ENCODE measurements at regions of chr6 and their contacts with region 1.

Region 1: DNA sequence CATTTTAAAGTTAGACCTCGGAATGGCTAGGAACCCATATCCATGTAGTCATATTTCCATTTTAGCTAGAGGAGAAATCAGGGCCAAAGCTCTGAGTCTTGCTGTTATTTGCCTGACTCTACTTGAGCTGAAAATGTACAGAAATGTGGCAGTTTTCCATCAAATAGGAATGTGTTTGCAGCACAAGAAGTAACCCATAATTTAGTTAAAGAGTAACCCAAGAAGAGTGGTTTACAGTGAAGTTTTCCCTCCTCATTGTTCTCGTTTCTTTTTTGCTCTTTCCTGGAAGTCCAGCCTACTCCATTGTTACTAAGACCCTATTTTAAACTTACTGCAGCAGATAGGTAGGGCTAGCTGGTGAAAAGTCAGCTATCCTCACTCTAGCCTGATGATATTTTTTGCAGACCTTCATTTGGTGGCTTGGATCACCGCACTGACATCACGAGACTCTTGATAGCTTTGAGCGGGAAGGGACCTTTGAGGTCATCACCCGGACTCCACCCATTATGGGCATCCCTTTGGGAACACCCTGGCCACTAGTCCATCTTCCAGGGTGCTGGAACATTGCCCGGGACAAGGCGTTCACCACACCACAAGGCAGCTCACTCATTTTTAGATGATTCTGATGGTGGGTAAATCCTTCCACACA is 28.0 kb upstream of the ADGRF5 start:
- DNase-seq: peak; percentile 74 to 90 (median 83)
- ATAC-seq: peak; percentile 79 to 86 (median 82)
- H3K4me3 ChIP-seq: peak overlapping the region in 2 of 12 donors; percentile 17 to 21
- H3K27ac ChIP-seq: peak overlapping the region; percentile 61 to 90 (median 83)
- H3K4me1 ChIP-seq: peaks cover 0 to 61% (median 29%) of the 10 kb centered on the region in 12 donors
- H3K27me3 ChIP-seq: no peaks in the 10 kb centered on the region
- CTCF ChIP-seq: no peak
- POLR2A ChIP-seq: no peak

Region 2: GRCh38 chr6:46921731-46922130 is 28.0 kb before region 1 on chr6 and contains the start of gene ADGRF5:
- intact Hi-C with region 1: loop called in 2 of 10 experiments (anchors 2 kb)
- DNase-seq: peak; percentile 51 to 68 (median 57)
- ATAC-seq: peak; percentile 51 to 78 (median 64)
- H3K4me3 ChIP-seq: peak within 1 kb of the TSS; percentile 24 to 72 (median 53)
- H3K27ac ChIP-seq: peak within 1 kb of the TSS; percentile 70 to 93 (median 88)
- H3K4me1 ChIP-seq: peaks cover 0 to 58% (median 18%) of the 10 kb centered on the region in 12 donors
- H3K27me3 ChIP-seq: no peaks in the 10 kb centered on the region
- CTCF ChIP-seq: no peak
- POLR2A ChIP-seq: peak in 1 of 2 donors; percentile 61
- total RNA-seq, gene ADGRF5: 27.3 to 89.6 (median 47.6) TPM

Region 3: DNA sequence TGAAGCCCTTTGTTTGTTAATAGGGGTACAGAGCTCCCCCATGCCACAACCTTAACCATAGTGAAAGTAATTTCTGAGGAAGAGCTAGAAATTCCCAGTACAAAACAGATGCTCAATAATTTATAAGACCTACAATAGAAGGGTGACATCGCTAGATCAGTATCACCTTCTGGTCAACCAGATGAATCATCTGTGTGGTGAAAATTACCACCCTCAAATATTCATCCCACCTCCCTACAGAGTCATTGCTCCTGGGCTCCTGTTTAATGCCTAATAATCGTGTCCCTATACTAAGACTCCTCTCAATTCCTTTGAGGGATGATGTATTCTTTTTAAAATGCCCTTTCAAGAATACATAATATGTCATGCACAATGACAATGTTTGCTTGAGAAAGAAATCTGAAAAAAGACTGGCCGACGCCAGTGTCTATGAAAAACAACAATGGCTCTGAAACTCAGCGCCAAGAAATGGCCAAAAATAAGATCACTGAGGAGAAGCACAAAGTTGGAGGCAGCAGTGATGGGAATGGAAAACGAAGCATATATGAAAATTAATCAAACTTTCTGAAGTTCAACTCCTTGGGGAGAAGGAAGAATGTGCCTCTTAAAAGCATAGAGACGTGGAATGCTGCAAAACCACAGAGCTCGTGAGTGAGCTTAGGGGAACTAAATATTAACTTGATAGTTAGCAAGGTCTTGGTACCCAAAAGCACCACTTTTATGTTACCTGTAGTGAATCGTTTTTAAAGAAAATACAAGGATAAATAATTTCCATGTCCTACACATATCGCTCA is 17.0 kb before region 1 on chr6:
- intact Hi-C with region 1: loop called in 1 of 10 experiments (anchors 2 kb)
- DNase-seq: no peak
- ATAC-seq: peak in 2 of 4 donors; percentile 13 to 55
- H3K4me3 ChIP-seq: no peak overlapping the region
- H3K27ac ChIP-seq: peak overlapping the region in 11 of 12 donors; percentile 21 to 83 (median 55)
- H3K4me1 ChIP-seq: peaks cover 0 to 45% (median 13%) of the 10 kb centered on the region in 12 donors
- H3K27me3 ChIP-seq: no peaks in the 10 kb centered on the region
- CTCF ChIP-seq: no peak
- POLR2A ChIP-seq: no peak

Region 4: DNA sequence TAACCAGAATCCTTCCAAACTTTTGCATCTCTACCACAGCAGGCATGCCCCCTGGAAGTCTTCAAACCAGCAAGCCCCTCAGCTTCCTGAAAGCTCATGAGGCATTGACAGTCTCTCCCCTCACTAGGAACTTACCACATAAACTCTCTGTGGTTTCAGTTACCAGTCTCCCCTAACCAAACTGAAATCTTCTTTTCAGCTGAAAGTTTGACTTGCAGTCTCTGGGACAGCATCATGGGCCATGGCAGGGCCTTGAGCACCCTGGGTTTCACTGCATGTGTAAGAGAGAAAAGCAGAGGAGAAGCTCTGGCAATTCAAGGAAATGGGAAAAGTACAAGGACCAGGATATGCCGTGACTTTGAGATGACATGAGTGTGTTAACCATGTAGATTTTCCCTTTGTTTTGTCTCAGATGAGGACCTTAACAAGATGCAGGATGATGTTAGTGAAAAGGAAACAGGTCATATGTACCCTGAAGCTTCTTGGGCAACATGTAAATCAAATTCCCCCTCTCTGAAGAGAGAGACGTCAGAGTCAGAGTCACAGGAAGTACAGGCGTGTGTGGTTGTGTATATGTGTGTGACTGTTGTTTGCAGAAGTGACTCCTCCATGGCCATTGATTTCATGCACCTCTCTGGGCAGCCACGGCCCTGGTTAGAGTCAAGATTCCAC is 253.6 kb after region 1 on chr6:
- intact Hi-C with region 1: no loop called
- DNase-seq: no peak
- ATAC-seq: peak in 1 of 4 donors; percentile 30
- H3K4me3 ChIP-seq: no peak overlapping the region
- H3K27ac ChIP-seq: no peak overlapping the region
- H3K4me1 ChIP-seq: peaks cover 0 to 3% (median 0%) of the 10 kb centered on the region in 12 donors
- H3K27me3 ChIP-seq: no peaks in the 10 kb centered on the region
- CTCF ChIP-seq: no peak
- POLR2A ChIP-seq: no peak

Measured in heart left ventricle (tissue), 16 donors.